ENCODE measurements at regions of chr14 and their contacts with region 1.

Region 1: DNA sequence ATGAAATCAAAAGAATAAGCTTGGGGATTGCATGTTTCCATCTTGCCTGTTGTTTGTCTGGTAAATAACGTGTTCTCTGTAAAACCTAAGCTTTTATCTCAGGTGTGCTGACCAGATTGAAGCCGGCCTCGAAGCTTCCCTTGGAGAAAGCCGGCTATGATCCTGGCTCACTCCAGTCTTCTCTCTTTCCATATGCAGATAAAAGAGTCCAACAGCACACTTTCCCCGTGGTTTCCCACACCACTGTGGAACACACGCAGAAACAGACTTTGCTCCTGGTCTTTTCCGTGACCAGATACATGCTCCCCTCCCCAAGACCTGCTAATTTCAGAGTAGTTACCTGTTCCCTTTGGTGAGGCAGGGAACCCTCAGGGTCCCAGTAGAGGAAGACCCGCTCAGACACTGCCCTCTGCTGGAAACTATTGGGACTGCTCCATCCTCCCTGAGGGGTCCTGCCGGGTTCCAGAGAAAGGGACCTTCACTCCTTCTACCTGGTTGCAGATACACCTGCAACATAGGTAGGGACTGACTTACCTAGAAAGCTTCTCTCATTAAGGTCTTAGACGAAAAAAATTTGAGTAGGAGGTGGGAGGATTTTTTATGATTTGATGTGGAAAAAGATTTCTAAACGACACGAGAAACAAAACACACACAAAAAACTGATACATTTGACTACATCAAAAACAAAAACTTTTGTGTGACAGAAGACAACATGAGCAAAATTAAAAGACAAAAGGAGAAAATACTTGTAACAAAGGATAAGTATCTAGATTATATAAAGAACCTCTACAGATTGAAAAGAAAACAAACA is 415.5 kb upstream of the CCDC196 start:
- DNase-seq: peak; percentile 49 to 80 (median 69)
- ATAC-seq: peak; percentile 93
- H3K4me3 ChIP-seq: no peak overlapping the region
- H3K4me3 Mint-ChIP-seq: no peak overlapping the region
- H3K27ac ChIP-seq: no peak overlapping the region
- H3K27ac Mint-ChIP-seq: no peak overlapping the region
- H3K4me1 ChIP-seq: peaks cover 4% of the 10 kb centered on the region
- H3K4me1 Mint-ChIP-seq: peaks cover 4% of the 10 kb centered on the region
- H3K27me3 ChIP-seq: no peaks in the 10 kb centered on the region
- H3K27me3 Mint-ChIP-seq: peaks cover 5% of the 10 kb centered on the region
- CTCF ChIP-seq: peak; percentile 97

Region 2: GRCh38 chr14:64294672-64295413 is 1775.9 kb before region 1 on chr14:
- CTCF ChIA-PET with region 1: no interaction called
- POLR2A ChIA-PET with region 1: no interaction called
- intact Hi-C with region 1: no loop called
- DNase-seq: peak; percentile 68 to 86 (median 77)
- ATAC-seq: peak; percentile 82
- H3K4me3 ChIP-seq: peak overlapping the region; percentile 60
- H3K4me3 Mint-ChIP-seq: peak overlapping the region; percentile 82
- H3K27ac ChIP-seq: no peak overlapping the region
- H3K27ac Mint-ChIP-seq: no peak overlapping the region
- H3K4me1 ChIP-seq: peaks cover 18% of the 10 kb centered on the region
- H3K4me1 Mint-ChIP-seq: peaks cover 15% of the 10 kb centered on the region
- H3K27me3 ChIP-seq: peaks cover 6 to 11% of the 10 kb centered on the region in 2 experiments
- H3K27me3 Mint-ChIP-seq: peaks cover 50% of the 10 kb centered on the region
- CTCF ChIP-seq: peak; percentile 73

Region 3: DNA sequence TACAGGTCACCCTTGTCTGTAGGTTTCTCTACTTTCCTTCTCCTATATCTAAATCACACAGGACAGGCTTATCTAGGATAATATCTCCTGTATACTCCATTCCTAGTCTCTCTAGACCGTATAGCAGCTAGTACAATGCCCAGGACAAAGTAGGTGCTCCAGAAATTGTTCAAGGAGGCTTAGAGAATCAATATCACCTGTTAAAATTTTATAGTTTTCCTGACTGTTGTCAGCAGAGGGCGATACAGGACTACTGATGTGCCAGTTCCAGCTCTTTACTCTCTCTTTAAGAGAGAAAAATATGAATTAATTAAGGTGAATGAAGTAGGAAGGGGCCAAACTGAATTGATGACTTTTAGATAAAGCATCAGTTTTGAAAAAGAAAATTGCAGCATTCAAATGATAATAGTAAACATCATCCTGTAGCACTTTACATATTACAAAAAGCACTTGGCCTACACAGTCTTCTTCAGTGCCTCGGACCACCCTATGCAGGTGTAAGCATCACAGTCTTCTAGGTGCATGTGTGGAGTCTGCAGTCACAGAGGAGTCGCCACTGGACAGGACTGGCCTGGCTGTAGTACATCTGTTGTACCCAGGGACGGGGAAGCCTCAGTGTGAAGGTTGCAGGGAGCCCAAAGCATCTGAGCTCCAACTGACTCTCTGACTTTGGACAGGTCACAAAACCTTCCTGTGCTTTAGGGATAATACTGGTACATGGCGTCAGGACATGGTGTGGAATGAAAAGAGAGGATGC is 906.5 kb before region 1 on chr14:
- CTCF ChIA-PET with region 1: interaction called, 19 read pairs
- POLR2A ChIA-PET with region 1: no interaction called
- intact Hi-C with region 1: loop called (anchors 1 kb)
- DNase-seq: peak in 13 of 14 experiments; percentile 4 to 79 (median 21)
- ATAC-seq: peak; percentile 54
- H3K4me3 ChIP-seq: no peak overlapping the region
- H3K4me3 Mint-ChIP-seq: no peak overlapping the region
- H3K27ac ChIP-seq: no peak overlapping the region
- H3K27ac Mint-ChIP-seq: no peak overlapping the region
- H3K4me1 ChIP-seq: no peaks in the 10 kb centered on the region
- H3K4me1 Mint-ChIP-seq: peaks cover 5% of the 10 kb centered on the region
- H3K27me3 ChIP-seq: no peaks in the 10 kb centered on the region
- H3K27me3 Mint-ChIP-seq: no peaks in the 10 kb centered on the region
- CTCF ChIP-seq: peak; percentile 93

Region 4: GRCh38 chr14:65222440-65222858 is 848.3 kb before region 1 on chr14:
- CTCF ChIA-PET with region 1: no interaction called
- POLR2A ChIA-PET with region 1: no interaction called
- intact Hi-C with region 1: loop called (anchors 1 to 2 kb)
- DNase-seq: peak; percentile 22 to 75 (median 46)
- ATAC-seq: peak; percentile 79
- H3K4me3 ChIP-seq: no peak overlapping the region
- H3K4me3 Mint-ChIP-seq: no peak overlapping the region
- H3K27ac ChIP-seq: no peak overlapping the region
- H3K27ac Mint-ChIP-seq: peak overlapping the region; percentile 3
- H3K4me1 ChIP-seq: peaks cover 42% of the 10 kb centered on the region
- H3K4me1 Mint-ChIP-seq: peaks cover 33% of the 10 kb centered on the region
- H3K27me3 ChIP-seq: no peaks in the 10 kb centered on the region
- H3K27me3 Mint-ChIP-seq: no peaks in the 10 kb centered on the region
- CTCF ChIP-seq: peak; percentile 76

Region 5: GRCh38 chr14:65817041-65817440 is 253.7 kb before region 1 on chr14:
- CTCF ChIA-PET with region 1: no interaction called
- POLR2A ChIA-PET with region 1: no interaction called
- intact Hi-C with region 1: loop called in 1 of 2 experiments (anchors 2 kb)
- DNase-seq: no peak
- ATAC-seq: no peak
- H3K4me3 ChIP-seq: no peak overlapping the region
- H3K4me3 Mint-ChIP-seq: no peak overlapping the region
- H3K27ac ChIP-seq: no peak overlapping the region
- H3K27ac Mint-ChIP-seq: no peak overlapping the region
- H3K4me1 ChIP-seq: no peaks in the 10 kb centered on the region
- H3K4me1 Mint-ChIP-seq: peaks cover 5% of the 10 kb centered on the region
- H3K27me3 ChIP-seq: no peaks in the 10 kb centered on the region
- H3K27me3 Mint-ChIP-seq: no peaks in the 10 kb centered on the region
- CTCF ChIP-seq: no peak